Body of pancreas (tissue), 4 donors: ENCODE measurements at regions of chrX and their contacts with region 1.

Region 1: GRCh38 chrX:129726307-129727111 is 12.3 kb upstream of the XPNPEP2 start:
- DNase-seq: peak; percentile 56 to 75 (median 60)
- ATAC-seq: peak; percentile 71
- H3K4me3 ChIP-seq: no peak overlapping the region
- H3K27ac ChIP-seq: no peak overlapping the region
- H3K4me1 ChIP-seq: no peaks in the 10 kb centered on the region
- H3K27me3 ChIP-seq: no peaks in the 10 kb centered on the region
- CTCF ChIP-seq: peak; percentile 4 to 72 (median 63)
- POLR2A ChIP-seq: no peak

Region 2: DNA sequence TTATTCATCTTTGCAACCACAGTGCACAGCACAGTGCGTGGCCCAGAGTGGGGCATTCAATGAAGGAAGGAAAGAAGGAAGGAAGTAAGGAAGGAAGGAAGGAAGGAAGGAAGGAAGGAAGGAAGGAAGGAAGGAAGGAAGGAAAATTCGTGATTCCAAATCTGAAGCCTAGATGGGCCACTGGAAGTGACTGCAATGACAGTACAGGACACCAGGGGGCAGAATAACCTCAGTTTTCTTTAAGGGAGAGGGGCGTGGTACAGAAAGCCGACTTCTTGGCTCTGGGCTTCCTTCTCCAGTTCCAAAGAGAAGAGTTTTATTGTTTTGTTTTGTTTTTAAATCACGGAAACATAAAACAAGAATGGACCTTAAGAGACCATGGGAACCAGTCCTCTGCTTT is 119.6 kb before region 1 on chrX:
- intact Hi-C with region 1: loop called (anchors 10 kb)
- DNase-seq: peak; percentile 60 to 77 (median 66)
- ATAC-seq: peak; percentile 61
- H3K4me3 ChIP-seq: no peak overlapping the region
- H3K27ac ChIP-seq: no peak overlapping the region
- H3K4me1 ChIP-seq: peaks cover 6% of the 10 kb centered on the region
- H3K27me3 ChIP-seq: no peaks in the 10 kb centered on the region
- CTCF ChIP-seq: peak; percentile 34 to 86 (median 74)
- POLR2A ChIP-seq: no peak

Region 3: GRCh38 chrX:129618997-129619396 is 107.5 kb before region 1 on chrX:
- intact Hi-C with region 1: no loop called
- DNase-seq: peak in 3 of 4 donors; percentile 12 to 51 (median 45)
- ATAC-seq: no peak
- H3K4me3 ChIP-seq: no peak overlapping the region
- H3K27ac ChIP-seq: no peak overlapping the region
- H3K4me1 ChIP-seq: no peaks in the 10 kb centered on the region
- H3K27me3 ChIP-seq: no peaks in the 10 kb centered on the region
- CTCF ChIP-seq: no peak
- POLR2A ChIP-seq: no peak

Region 4: GRCh38 chrX:129642641-129643040 is 83.9 kb before region 1 on chrX:
- intact Hi-C with region 1: loop called (anchors 10 kb)
- DNase-seq: no peak
- ATAC-seq: no peak
- H3K4me3 ChIP-seq: no peak overlapping the region
- H3K27ac ChIP-seq: no peak overlapping the region
- H3K4me1 ChIP-seq: no peaks in the 10 kb centered on the region
- H3K27me3 ChIP-seq: no peaks in the 10 kb centered on the region
- CTCF ChIP-seq: no peak
- POLR2A ChIP-seq: no peak

Region 5: GRCh38 chrX:129808829-129809796 is 82.6 kb after region 1 on chrX:
- intact Hi-C with region 1: no loop called
- DNase-seq: no peak
- ATAC-seq: no peak
- H3K4me3 ChIP-seq: no peak overlapping the region
- H3K27ac ChIP-seq: no peak overlapping the region
- H3K4me1 ChIP-seq: no peaks in the 10 kb centered on the region
- H3K27me3 ChIP-seq: no peaks in the 10 kb centered on the region
- CTCF ChIP-seq: no peak
- POLR2A ChIP-seq: no peak